Psoas muscle (tissue), 8 donors: ENCODE measurements at regions of chr12 and their contacts with region 1.

Region 1: DNA sequence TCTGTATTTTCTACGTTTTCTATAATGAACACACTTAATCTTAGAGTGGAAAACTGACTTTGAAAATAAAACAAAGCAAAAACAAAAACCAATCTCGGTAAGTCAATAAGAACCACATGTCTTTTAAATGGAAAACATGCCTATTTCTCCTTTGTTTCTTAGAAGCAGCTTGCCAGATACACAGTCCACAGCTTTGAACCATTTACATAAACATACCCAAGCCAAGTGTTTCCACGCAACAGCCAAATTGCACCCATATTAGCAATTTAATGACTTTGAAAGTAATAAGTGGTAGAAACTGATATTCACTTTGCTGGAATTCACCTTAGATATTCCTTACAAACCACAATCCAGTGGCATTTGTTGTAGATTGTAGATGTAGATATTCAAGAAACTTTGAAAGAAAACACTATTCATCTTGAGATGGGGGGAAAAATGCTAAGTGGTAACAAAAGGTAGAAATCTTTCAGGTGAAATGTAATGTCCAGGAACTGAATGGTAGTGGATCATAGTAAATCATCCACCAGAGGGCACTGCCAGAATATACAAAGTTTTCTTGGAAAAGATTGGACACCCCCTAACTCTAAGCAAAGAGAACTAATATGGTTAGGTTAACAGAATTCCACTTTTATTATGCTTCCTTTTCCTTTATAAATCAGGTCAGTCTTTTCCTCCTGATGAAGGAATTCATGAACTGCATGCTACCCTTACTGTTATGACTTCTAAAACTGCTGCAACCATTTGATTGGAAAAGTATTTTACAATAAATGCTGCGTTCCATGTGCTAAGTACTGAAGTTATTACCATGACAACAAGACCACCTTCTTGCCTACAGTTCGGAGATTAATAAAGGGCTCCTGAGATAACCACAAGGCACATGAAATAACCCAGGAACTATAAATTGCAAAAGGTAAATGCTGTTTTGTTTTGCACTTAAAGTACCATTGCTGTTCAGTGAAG is 69.8 kb downstream of the RERG start:
- DNase-seq: no peak
- ATAC-seq: peak in 2 of 4 donors; percentile 49 to 60
- H3K4me3 ChIP-seq: no peak overlapping the region
- H3K27ac ChIP-seq: no peak overlapping the region
- H3K4me1 ChIP-seq: no peaks in the 10 kb centered on the region
- H3K27me3 ChIP-seq: no peaks in the 10 kb centered on the region
- CTCF ChIP-seq: peak; percentile 52

Region 2: DNA sequence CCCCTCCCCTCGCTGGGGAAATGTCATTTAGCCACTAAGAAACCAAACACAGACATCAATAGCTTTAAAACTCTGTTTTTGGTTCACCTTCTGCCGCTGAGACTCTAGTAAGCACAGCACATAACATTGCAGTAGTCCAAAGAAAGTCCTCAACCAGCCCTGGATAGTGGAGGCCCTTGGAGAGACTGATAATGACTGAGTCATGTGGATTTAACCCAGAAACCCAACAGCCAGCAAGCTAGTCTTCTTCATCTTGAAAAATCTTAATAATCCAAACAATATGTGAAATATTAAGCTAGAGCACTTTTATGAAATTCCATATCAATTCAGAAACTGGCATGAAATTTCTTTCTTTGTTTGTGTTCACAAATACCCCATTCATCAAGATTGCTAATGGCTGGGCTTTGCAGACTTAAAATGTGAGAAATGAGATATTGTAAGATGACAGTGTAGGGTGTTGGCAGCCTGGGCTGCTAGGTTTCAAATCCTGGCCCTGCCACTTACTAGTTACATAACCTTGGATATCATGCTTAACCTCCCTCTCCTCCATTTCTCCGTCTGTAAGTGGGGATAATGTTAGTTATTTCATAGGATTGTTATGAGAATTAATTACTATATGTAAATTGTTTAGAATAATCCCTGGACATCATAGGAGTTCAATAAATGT is 29.7 kb after region 1 on chr12:
- intact Hi-C with region 1: no loop called
- DNase-seq: no peak
- ATAC-seq: no peak
- H3K4me3 ChIP-seq: no peak overlapping the region
- H3K27ac ChIP-seq: no peak overlapping the region
- H3K4me1 ChIP-seq: no peaks in the 10 kb centered on the region
- H3K27me3 ChIP-seq: no peaks in the 10 kb centered on the region
- CTCF ChIP-seq: no peak

Region 3: GRCh38 chr12:15216036-15216794 is 64.8 kb after region 1 on chr12:
- intact Hi-C with region 1: loop called (anchors 1 to 5 kb)
- DNase-seq: no peak
- ATAC-seq: no peak
- H3K4me3 ChIP-seq: no peak overlapping the region
- H3K27ac ChIP-seq: no peak overlapping the region
- H3K4me1 ChIP-seq: no peaks in the 10 kb centered on the region
- H3K27me3 ChIP-seq: peaks cover 0 to 9% (median 0%) of the 10 kb centered on the region in 3 donors
- CTCF ChIP-seq: no peak

Region 4: DNA sequence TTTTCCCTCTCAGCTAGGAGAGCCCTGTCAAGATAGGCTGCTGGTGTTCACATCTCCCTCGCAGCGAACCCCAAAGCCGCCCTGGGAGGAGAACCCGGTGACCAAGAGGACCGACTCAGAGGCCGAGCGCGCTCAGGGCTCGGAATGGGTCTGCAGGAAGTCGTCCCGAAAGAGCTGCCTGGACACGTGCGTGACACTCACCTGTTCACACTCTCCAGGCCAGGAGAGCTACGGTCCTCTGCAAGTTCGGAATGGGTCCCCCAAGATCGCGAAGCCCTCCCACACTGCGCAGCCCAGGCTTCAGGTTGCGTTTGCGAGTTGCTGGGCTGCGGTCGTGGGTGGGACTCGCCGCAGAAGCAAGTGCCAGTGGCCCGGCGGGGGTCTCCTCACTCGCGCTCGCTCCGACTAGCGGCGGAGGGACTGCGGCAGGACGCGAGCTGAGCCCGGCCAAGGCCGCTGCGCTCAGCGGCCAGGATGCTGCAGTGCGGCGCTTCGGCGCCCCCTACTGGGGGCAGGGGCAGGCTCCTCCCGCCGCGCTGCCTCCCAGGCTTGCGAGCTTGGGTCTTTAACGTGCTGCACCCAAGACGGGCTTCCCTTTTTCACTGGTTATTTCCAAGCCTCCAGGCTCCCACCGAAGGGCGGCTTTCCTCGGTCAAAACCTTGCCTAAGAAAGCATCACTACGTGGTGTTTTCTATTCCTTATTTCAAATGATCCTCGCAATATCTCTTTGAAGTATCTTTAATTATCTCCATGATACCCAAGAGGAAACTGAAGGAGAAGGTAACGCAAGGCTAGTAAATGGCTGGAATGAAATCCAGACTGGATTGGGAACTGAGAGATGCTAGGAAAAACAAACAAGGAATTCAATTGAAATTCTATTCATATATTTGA is 69.8 kb after region 1 on chr12 and contains the start of gene RERG:
- intact Hi-C with region 1: loop called (anchors 1 to 5 kb)
- DNase-seq: peak; percentile 85 to 90
- ATAC-seq: peak; percentile 97 to 100 (median 100)
- H3K4me3 ChIP-seq: peak within 1 kb of the TSS; percentile 71
- H3K27ac ChIP-seq: peak within 1 kb of the TSS; percentile 26
- H3K4me1 ChIP-seq: peaks cover 5% of the 10 kb centered on the region
- H3K27me3 ChIP-seq: peaks cover 0 to 10% (median 3%) of the 10 kb centered on the region in 3 donors
- CTCF ChIP-seq: peak; percentile 93
- total RNA-seq, gene RERG: 1.6 to 2.4 (median 2.3) TPM

Region 5: DNA sequence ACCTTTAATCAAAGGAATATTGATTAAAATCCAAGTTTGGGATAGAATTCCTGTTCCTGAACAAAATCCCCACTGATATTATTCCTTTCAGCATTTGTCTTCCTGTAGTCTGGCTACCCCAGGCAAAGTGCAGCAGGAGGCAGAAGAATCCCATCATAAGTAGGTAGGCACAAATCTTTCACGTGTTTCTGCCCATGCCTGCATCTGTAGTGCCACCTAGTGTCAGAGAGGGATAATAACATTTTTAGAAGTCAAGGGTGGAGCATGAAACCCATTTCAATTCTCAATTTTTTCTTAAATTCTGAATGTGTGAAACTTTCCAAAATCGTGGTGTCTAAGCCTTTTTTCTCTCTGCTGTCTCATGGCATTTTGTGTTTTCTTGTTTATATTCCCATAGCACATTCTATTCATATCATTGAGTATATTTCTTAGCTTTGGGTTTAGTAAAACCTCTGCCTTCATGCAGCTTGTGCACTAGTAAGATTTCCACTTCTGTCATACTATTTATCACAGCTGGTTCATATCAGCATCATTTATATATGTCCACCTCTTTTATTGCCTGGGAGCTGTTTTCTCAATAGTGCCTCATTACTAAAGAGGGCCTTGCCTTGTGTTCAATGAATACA is 117.6 kb after region 1 on chr12:
- intact Hi-C with region 1: loop called in 1 of 2 experiments (anchors 2 kb)
- DNase-seq: no peak
- ATAC-seq: peak; percentile 77 to 86 (median 82)
- H3K4me3 ChIP-seq: no peak overlapping the region
- H3K27ac ChIP-seq: no peak overlapping the region
- H3K4me1 ChIP-seq: no peaks in the 10 kb centered on the region
- H3K27me3 ChIP-seq: no peaks in the 10 kb centered on the region
- CTCF ChIP-seq: peak; percentile 79